ENCODE measurements at regions of chr16 and their contacts with region 1.

Region 1: DNA sequence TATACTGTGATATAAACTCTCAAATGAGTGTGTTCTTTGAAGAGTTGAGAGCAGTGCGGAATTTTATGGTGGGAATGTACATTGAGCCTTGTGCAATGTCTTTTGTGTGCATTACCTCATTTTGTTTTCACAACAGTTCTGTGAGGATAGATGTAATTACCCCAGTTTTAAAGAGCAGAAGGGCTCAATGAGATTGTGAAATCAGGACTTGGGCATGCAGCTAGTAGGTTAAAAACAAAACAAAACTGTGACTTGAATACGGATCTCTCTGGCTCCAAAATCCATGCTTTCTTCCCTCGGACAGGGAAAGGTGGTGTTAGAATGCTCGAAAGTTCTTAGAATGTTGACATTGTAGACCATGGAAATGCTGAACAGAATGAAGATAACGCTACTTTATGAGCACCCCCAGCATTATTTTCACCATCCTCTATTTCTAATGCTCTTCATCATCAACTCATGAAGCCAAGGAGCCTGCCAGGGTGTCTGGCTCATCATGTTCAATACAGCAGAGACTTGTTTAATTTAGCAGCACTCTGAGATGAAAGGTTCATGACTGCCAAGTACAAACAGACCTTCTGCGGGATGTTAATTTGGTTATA is 17.1 kb downstream of the MRTFB start:
- DNase-seq: no peak
- ATAC-seq: no peak
- H3K4me3 Mint-ChIP-seq: no peak overlapping the region
- H3K27ac Mint-ChIP-seq: no peak overlapping the region
- H3K4me1 Mint-ChIP-seq: no peaks in the 10 kb centered on the region
- H3K27me3 Mint-ChIP-seq: no peaks in the 10 kb centered on the region
- CTCF ChIP-seq: no peak

Region 2: DNA sequence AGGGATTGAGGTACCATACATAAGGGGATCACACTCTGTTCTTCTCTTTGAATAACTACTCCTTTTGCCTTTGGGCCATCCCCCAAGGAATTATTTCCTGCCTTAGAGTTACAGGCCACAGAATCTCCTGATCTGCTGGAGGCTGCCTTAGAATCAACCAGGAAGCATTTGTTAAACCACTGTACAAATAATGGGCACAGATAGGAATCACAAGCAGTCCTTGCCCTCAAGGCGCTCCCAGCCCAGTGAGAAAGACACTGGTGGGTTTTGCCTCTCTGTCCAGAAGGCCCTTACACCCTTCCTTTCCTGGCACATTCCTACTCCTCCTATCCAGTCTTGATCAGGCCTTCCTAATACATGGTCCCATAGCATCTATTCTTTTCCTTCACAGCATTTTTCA is 28.8 kb after region 1 on chr16:
- CTCF ChIA-PET with region 1: no interaction called
- POLR2A ChIA-PET with region 1: interaction called, 13 read pairs
- intact Hi-C with region 1: no loop called
- DNase-seq: no peak
- ATAC-seq: no peak
- H3K4me3 Mint-ChIP-seq: no peak overlapping the region
- H3K27ac Mint-ChIP-seq: no peak overlapping the region
- H3K4me1 Mint-ChIP-seq: peaks cover 13% of the 10 kb centered on the region
- H3K27me3 Mint-ChIP-seq: no peaks in the 10 kb centered on the region
- CTCF ChIP-seq: no peak

Region 3: DNA sequence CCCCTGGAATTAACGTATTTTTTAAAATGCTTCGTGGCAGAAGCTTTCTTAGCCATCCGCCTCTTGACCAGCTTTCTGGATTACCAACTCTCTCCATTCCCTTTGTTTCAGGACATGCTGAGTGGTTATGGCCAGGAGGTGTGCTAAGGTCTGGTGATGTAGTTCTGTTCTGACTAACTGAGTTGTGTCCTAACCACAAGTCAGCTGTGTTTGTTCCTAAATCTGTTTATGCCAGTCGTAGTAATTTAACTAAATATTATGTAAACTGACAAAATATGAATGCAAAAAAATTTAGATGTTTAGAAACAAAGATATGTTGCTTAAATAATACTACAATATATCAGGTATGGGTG is 44.4 kb after region 1 on chr16:
- CTCF ChIA-PET with region 1: no interaction called
- POLR2A ChIA-PET with region 1: no interaction called
- intact Hi-C with region 1: no loop called
- DNase-seq: no peak
- ATAC-seq: no peak
- H3K4me3 Mint-ChIP-seq: no peak overlapping the region
- H3K27ac Mint-ChIP-seq: no peak overlapping the region
- H3K4me1 Mint-ChIP-seq: no peaks in the 10 kb centered on the region
- H3K27me3 Mint-ChIP-seq: no peaks in the 10 kb centered on the region
- CTCF ChIP-seq: no peak